ENCODE measurements at regions of chr3 and their contacts with region 1.

Region 1: GRCh38 chr3:196179380-196180308 is 31.6 kb downstream of the ZDHHC19 start:
- DNase-seq: peak; percentile 51 to 97 (median 87)
- ATAC-seq: peak; percentile 92
- H3K4me3 ChIP-seq: peak overlapping the region; percentile 32
- H3K4me3 Mint-ChIP-seq: peak overlapping the region; percentile 74
- H3K27ac ChIP-seq: peak overlapping the region; percentile 53 to 91
- H3K27ac Mint-ChIP-seq: peak overlapping the region; percentile 98
- H3K4me1 ChIP-seq: peaks cover 38% of the 10 kb centered on the region
- H3K4me1 Mint-ChIP-seq: peaks cover 34% of the 10 kb centered on the region
- H3K27me3 ChIP-seq: no peaks in the 10 kb centered on the region
- H3K27me3 Mint-ChIP-seq: no peaks in the 10 kb centered on the region
- CTCF ChIP-seq: peak; percentile 48

Region 2: GRCh38 chr3:196192036-196192523 is 12.4 kb after region 1 on chr3:
- CTCF ChIA-PET with region 1: interaction called, 10 read pairs
- POLR2A ChIA-PET with region 1: interaction called, 8 read pairs
- intact Hi-C with region 1: loop called (anchors 1 kb)
- DNase-seq: peak in 7 of 9 experiments; percentile 12 to 87 (median 51)
- ATAC-seq: peak; percentile 39
- H3K4me3 ChIP-seq: no peak overlapping the region
- H3K4me3 Mint-ChIP-seq: peak overlapping the region; percentile 39
- H3K27ac ChIP-seq: peak overlapping the region; percentile 16 to 79
- H3K27ac Mint-ChIP-seq: peak overlapping the region; percentile 92
- H3K4me1 ChIP-seq: peaks cover 22% of the 10 kb centered on the region
- H3K4me1 Mint-ChIP-seq: peaks cover 18% of the 10 kb centered on the region
- H3K27me3 ChIP-seq: no peaks in the 10 kb centered on the region
- H3K27me3 Mint-ChIP-seq: no peaks in the 10 kb centered on the region
- CTCF ChIP-seq: no peak

Region 3: DNA sequence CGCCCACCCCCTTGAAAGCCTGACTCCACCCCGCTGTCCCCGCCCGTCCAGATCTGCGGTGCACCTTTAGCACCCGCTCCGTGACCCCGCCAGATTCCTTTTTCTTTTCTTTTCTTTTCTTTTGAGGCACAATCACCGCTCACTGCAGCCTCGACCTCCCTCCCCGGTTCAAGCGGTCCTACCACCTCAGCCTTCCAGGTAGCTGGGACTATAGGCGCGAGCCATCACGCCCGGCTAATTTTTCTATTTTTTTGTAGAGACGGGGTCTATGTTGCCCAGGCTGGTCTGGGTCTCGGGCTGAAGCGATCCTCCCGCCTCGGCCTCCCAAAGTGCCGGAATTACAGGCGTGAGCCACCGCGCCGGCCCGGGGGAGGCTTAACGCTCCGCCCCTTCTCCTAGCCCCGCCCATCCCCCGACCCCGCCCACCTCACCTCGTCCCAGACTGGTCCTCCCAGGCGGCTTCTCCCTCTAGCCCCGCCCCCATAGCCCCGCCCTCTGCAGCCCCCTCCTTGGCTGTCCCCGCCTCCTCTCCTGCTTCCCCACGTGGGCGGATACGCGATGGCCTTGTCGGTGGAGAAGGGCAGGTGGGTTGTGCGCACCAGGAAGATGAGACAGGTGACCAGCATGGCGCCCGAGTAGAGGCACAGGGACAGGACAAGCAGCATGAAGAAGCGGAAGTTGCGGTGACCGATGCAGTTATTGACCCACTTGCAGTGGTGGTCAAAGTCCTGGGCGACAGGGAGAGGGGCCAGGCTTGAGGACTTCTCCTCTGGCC is 28.4 kb after region 1 on chr3:
- CTCF ChIA-PET with region 1: interaction called, 3 read pairs
- POLR2A ChIA-PET with region 1: interaction called, 4 read pairs
- intact Hi-C with region 1: loop called in 1 of 2 experiments (anchors 1 kb)
- DNase-seq: peak; percentile 34 to 83 (median 64)
- ATAC-seq: peak; percentile 78
- H3K4me3 ChIP-seq: peak overlapping the region; percentile 57 to 71
- H3K4me3 Mint-ChIP-seq: peak overlapping the region; percentile 85
- H3K27ac ChIP-seq: no peak overlapping the region
- H3K27ac Mint-ChIP-seq: peak overlapping the region; percentile 38
- H3K4me1 ChIP-seq: peaks cover 7% of the 10 kb centered on the region
- H3K4me1 Mint-ChIP-seq: peaks cover 12% of the 10 kb centered on the region
- H3K27me3 ChIP-seq: no peaks in the 10 kb centered on the region
- H3K27me3 Mint-ChIP-seq: no peaks in the 10 kb centered on the region
- CTCF ChIP-seq: no peak